Heart left ventricle (tissue), 16 donors: ENCODE measurements at regions of chr6 and their contacts with region 1.

Region 1: GRCh38 chr6:128899341-128900050 is 16.6 kb downstream of the LAMA2 start:
- DNase-seq: no peak
- ATAC-seq: no peak
- H3K4me3 ChIP-seq: no peak overlapping the region
- H3K27ac ChIP-seq: no peak overlapping the region
- H3K4me1 ChIP-seq: peaks cover 0 to 49% (median 22%) of the 10 kb centered on the region in 12 donors
- H3K27me3 ChIP-seq: no peaks in the 10 kb centered on the region
- CTCF ChIP-seq: no peak
- POLR2A ChIP-seq: no peak

Region 2: DNA sequence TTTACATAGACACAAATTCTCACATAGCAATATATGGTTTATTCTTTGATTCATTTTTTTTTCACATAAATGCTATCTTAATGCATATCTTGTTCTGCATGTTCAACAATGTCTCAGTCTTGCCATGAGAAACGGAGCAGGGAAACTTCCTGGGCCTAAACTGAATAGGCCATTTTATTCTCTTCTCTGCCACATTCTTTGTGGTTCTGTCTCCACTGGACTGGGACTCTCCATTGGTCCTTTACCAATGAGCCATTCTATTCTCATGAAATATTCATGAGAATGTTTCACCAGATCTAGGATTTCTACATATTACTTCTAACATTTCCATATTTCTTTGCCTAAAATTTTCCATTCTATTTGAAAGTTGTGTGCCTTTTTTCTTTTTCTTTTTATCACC is 26.3 kb after region 1 on chr6:
- intact Hi-C with region 1: loop called in 1 of 10 experiments (anchors 1 kb)
- DNase-seq: no peak
- ATAC-seq: no peak
- H3K4me3 ChIP-seq: no peak overlapping the region
- H3K27ac ChIP-seq: no peak overlapping the region
- H3K4me1 ChIP-seq: peaks cover 0 to 22% (median 4%) of the 10 kb centered on the region in 12 donors
- H3K27me3 ChIP-seq: no peaks in the 10 kb centered on the region
- CTCF ChIP-seq: no peak
- POLR2A ChIP-seq: no peak

Region 3: GRCh38 chr6:128954308-128955043 is 55.0 kb after region 1 on chr6:
- intact Hi-C with region 1: loop called in 1 of 10 experiments (anchors 10 kb)
- DNase-seq: no peak
- ATAC-seq: no peak
- H3K4me3 ChIP-seq: no peak overlapping the region
- H3K27ac ChIP-seq: no peak overlapping the region
- H3K4me1 ChIP-seq: peaks cover 0 to 63% (median 16%) of the 10 kb centered on the region in 12 donors
- H3K27me3 ChIP-seq: no peaks in the 10 kb centered on the region
- CTCF ChIP-seq: no peak
- POLR2A ChIP-seq: no peak

Region 4: GRCh38 chr6:129130959-129131681 is 231.6 kb after region 1 on chr6:
- intact Hi-C with region 1: loop called in 1 of 10 experiments (anchors 10 kb)
- DNase-seq: peak in 4 of 5 donors; percentile 33 to 65 (median 58)
- ATAC-seq: peak; percentile 60 to 81 (median 72)
- H3K4me3 ChIP-seq: no peak overlapping the region
- H3K27ac ChIP-seq: peak overlapping the region in 11 of 12 donors; percentile 41 to 90 (median 75)
- H3K4me1 ChIP-seq: peaks cover 0 to 72% (median 43%) of the 10 kb centered on the region in 12 donors
- H3K27me3 ChIP-seq: no peaks in the 10 kb centered on the region
- CTCF ChIP-seq: no peak
- POLR2A ChIP-seq: no peak